Mammary epithelial cell (primary cell): ENCODE measurements at regions of chr10 and their contacts with region 1.

Region 1: GRCh38 chr10:44733501-44734488 is 177.3 kb upstream of the TMEM72 start:
- DNase-seq: no peak
- H3K4me3 ChIP-seq: no peak overlapping the region
- H3K27ac ChIP-seq: no peak overlapping the region
- H3K4me1 ChIP-seq: no peaks in the 10 kb centered on the region
- H3K27me3 ChIP-seq: no peaks in the 10 kb centered on the region
- CTCF ChIP-seq: no peak

Region 2: DNA sequence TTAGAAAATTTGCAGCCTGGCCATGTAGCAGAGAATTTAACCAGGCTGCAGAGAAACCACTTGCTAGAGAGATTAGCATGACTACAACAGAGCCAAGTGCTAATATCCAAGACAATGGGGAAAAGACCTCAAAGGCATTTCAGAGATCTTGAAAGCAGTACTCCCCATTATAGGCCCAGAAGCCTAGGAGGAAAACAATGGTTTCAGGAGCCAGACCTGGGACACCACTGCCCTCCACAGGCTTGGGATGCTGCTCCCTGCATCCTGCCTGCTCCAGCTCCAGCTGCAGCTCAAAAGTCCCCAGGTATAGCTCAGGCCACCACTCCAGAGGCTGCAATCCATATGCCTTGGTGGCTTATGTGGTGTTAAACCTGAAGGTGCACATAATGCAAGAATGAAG is 75.9 kb after region 1 on chr10:
- CTCF ChIA-PET with region 1: no interaction called
- dilution Hi-C with region 1: no loop called
- in situ Hi-C with region 1: no loop called
- intact Hi-C with region 1: loop called (anchors 2 kb)
- DNase-seq: no peak
- H3K4me3 ChIP-seq: no peak overlapping the region
- H3K27ac ChIP-seq: no peak overlapping the region
- H3K4me1 ChIP-seq: no peaks in the 10 kb centered on the region
- H3K27me3 ChIP-seq: no peaks in the 10 kb centered on the region
- CTCF ChIP-seq: peak in 1 of 2 donors; percentile 44